Naive thymus-derived CD4-positive, alpha-beta T cell (primary cell): ENCODE measurements at regions of chr1 and their contacts with region 1.

Region 1: GRCh38 chr1:100866041-100866900 is 28.4 kb downstream of the EXTL2 start:
- DNase-seq: peak in 4 of 9 donors; percentile 6 to 21 (median 14)
- ATAC-seq: peak; percentile 51
- H3K4me3 ChIP-seq: no peak overlapping the region
- H3K4me3 Mint-ChIP-seq: no peak overlapping the region
- H3K27ac ChIP-seq: no peak overlapping the region
- H3K27ac Mint-ChIP-seq: no peak overlapping the region
- H3K4me1 ChIP-seq: no peaks in the 10 kb centered on the region
- H3K4me1 Mint-ChIP-seq: peaks cover 0 to 2% (median 0%) of the 10 kb centered on the region in 7 donors
- H3K27me3 ChIP-seq: no peaks in the 10 kb centered on the region
- H3K27me3 Mint-ChIP-seq: no peaks in the 10 kb centered on the region

Region 2: DNA sequence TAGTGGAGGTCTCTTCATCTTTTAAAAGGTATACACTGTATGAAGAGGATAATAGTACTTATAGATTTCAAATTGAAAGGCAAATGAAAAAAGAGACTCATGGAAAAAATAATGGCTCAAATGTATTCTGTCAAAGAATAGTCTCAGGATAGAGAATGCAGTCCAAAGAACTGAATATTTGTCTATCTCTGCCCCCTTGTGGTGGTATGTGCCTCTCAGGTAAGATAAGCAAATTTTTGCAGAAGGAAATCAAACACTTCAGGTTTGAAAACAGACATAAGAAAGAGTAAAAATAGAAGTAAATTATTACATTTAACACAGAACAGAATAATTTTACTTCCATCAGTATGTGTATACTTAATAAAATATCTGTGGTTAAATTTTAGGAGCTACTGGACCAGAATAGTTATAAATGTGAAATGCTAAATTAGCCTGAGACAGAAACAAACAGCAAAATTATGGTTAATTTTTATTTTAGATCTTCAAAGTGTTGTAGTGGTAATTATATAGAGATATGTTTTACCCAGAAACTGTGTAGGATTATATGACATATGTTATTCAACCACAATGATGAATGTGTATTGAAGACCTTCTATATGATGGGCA is 1384.8 kb before region 1 on chr1:
- CTCF ChIA-PET with region 1: no interaction called
- POLR2A ChIA-PET with region 1: no interaction called
- intact Hi-C with region 1: loop called in 1 of 2 experiments (anchors 5 kb)
- DNase-seq: peak in 7 of 9 donors; percentile 6 to 61 (median 47)
- ATAC-seq: peak; percentile 59
- H3K4me3 ChIP-seq: no peak overlapping the region
- H3K4me3 Mint-ChIP-seq: no peak overlapping the region
- H3K27ac ChIP-seq: no peak overlapping the region
- H3K27ac Mint-ChIP-seq: no peak overlapping the region
- H3K4me1 ChIP-seq: no peaks in the 10 kb centered on the region
- H3K4me1 Mint-ChIP-seq: no peaks in the 10 kb centered on the region
- H3K27me3 ChIP-seq: no peaks in the 10 kb centered on the region
- H3K27me3 Mint-ChIP-seq: peaks cover 8 to 35% (median 17%) of the 10 kb centered on the region in 5 donors

Region 3: GRCh38 chr1:99891997-99892396 is 974.3 kb before region 1 on chr1:
- CTCF ChIA-PET with region 1: no interaction called
- POLR2A ChIA-PET with region 1: no interaction called
- intact Hi-C with region 1: loop called in 1 of 2 experiments (anchors 10 kb)
- DNase-seq: no peak
- ATAC-seq: no peak
- H3K4me3 ChIP-seq: no peak overlapping the region
- H3K4me3 Mint-ChIP-seq: no peak overlapping the region
- H3K27ac ChIP-seq: no peak overlapping the region
- H3K27ac Mint-ChIP-seq: no peak overlapping the region
- H3K4me1 ChIP-seq: no peaks in the 10 kb centered on the region
- H3K4me1 Mint-ChIP-seq: no peaks in the 10 kb centered on the region
- H3K27me3 ChIP-seq: no peaks in the 10 kb centered on the region
- H3K27me3 Mint-ChIP-seq: no peaks in the 10 kb centered on the region

Region 4: DNA sequence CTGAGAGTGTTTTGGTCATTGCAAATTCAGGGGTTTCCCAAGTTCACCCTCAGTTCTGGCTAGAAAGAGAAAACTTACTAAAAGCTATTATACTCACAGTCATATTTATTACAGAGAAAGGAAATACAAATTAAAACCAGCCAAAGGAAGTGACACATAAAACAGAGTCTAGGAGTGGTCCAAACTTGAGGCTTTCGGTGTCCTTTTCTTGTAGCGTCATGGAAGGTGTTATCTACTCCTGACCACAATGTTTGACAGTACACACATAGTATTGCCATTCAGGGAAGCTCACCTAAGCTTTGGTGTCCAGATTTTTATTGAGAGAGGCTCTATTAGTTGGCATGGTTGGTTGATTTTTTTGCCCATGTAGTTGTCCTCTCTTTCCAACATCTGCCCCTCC is 837.5 kb before region 1 on chr1:
- CTCF ChIA-PET with region 1: no interaction called
- POLR2A ChIA-PET with region 1: no interaction called
- intact Hi-C with region 1: no loop called
- DNase-seq: no peak
- ATAC-seq: peak; percentile 89
- H3K4me3 ChIP-seq: no peak overlapping the region
- H3K4me3 Mint-ChIP-seq: peak overlapping the region in 1 of 10 donors; percentile 44
- H3K27ac ChIP-seq: no peak overlapping the region
- H3K27ac Mint-ChIP-seq: peak overlapping the region in 1 of 9 donors; percentile 11
- H3K4me1 ChIP-seq: peaks cover 0 to 5% of the 10 kb centered on the region in 2 donors
- H3K4me1 Mint-ChIP-seq: peaks cover 0 to 10% (median 0%) of the 10 kb centered on the region in 7 donors
- H3K27me3 ChIP-seq: no peaks in the 10 kb centered on the region
- H3K27me3 Mint-ChIP-seq: no peaks in the 10 kb centered on the region

Region 5: DNA sequence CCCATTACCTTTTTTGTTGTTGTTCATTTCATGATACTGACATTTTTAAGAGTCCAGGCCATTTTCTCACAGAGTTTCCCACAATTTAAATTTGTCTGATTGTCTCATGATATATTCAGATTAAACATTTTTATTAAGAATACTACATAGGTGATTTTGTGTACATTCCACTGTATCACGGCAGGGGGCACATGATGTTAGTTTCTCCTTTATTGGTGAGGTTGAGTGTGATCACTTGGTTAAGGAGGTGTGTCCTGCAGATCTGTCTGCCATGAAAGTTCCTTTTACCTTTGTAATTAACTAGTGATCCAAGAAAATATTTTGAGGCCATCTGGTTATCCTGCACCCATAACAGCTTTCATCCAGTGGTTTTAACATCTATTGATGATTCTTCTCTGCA is 588.4 kb before region 1 on chr1:
- CTCF ChIA-PET with region 1: no interaction called
- POLR2A ChIA-PET with region 1: no interaction called
- intact Hi-C with region 1: loop called (anchors 1 to 5 kb)
- DNase-seq: peak in 6 of 9 donors; percentile 5 to 42 (median 28)
- ATAC-seq: peak; percentile 75
- H3K4me3 ChIP-seq: no peak overlapping the region
- H3K4me3 Mint-ChIP-seq: no peak overlapping the region
- H3K27ac ChIP-seq: no peak overlapping the region
- H3K27ac Mint-ChIP-seq: peak overlapping the region in 3 of 9 donors; percentile 9 to 37 (median 27)
- H3K4me1 ChIP-seq: no peaks in the 10 kb centered on the region
- H3K4me1 Mint-ChIP-seq: peaks cover 9 to 50% (median 34%) of the 10 kb centered on the region in 7 donors
- H3K27me3 ChIP-seq: no peaks in the 10 kb centered on the region
- H3K27me3 Mint-ChIP-seq: no peaks in the 10 kb centered on the region

Region 6: DNA sequence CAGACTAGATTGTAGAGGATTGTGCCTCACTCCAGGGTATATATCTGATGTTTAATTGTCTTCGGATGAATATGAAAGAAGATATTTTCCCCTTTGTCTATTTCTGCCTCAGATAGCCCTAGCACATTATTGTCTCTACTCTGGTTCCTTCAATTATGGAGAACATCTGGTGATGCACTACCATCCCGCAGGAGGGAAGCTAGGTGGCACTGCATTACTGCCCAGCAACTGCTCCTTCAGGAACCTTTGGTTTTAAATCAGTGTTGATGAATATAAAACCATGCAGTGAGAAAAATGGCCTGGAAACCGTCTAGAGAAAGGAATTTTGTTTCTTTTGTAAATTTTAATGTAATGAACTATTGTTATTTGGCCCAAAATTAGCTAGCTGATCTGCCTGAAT is 259.8 kb before region 1 on chr1:
- CTCF ChIA-PET with region 1: no interaction called
- POLR2A ChIA-PET with region 1: no interaction called
- intact Hi-C with region 1: loop called (anchors 1 to 2 kb)
- DNase-seq: no peak
- ATAC-seq: no peak
- H3K4me3 ChIP-seq: no peak overlapping the region
- H3K4me3 Mint-ChIP-seq: no peak overlapping the region
- H3K27ac ChIP-seq: no peak overlapping the region
- H3K27ac Mint-ChIP-seq: no peak overlapping the region
- H3K4me1 ChIP-seq: no peaks in the 10 kb centered on the region
- H3K4me1 Mint-ChIP-seq: no peaks in the 10 kb centered on the region
- H3K27me3 ChIP-seq: no peaks in the 10 kb centered on the region
- H3K27me3 Mint-ChIP-seq: peaks cover 12 to 29% (median 20%) of the 10 kb centered on the region in 5 donors

Region 7: DNA sequence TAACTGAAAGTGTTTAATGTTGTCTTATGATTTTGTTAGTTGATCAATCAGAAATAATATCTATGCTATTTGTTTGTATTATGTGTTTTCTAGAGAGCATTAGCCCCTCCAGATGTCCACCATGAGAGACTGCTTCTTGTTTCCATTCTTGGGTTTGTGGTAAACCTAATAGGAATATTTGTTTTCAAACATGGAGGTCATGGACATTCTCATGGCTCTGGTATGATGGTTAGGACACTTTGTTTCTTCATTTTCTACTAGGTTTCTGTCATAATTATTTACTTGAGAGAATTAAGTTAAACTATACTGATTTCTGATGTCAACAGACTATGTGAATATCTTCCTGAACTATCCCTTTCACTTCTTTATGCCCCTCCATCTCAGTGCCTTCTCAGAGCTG is 45.7 kb after region 1 on chr1:
- CTCF ChIA-PET with region 1: no interaction called
- POLR2A ChIA-PET with region 1: no interaction called
- intact Hi-C with region 1: no loop called
- DNase-seq: no peak
- ATAC-seq: no peak
- H3K4me3 ChIP-seq: no peak overlapping the region
- H3K4me3 Mint-ChIP-seq: no peak overlapping the region
- H3K27ac ChIP-seq: no peak overlapping the region
- H3K27ac Mint-ChIP-seq: peak overlapping the region in 6 of 9 donors; percentile 5 to 79 (median 32)
- H3K4me1 ChIP-seq: no peaks in the 10 kb centered on the region
- H3K4me1 Mint-ChIP-seq: peaks cover 19 to 47% (median 44%) of the 10 kb centered on the region in 7 donors
- H3K27me3 ChIP-seq: no peaks in the 10 kb centered on the region
- H3K27me3 Mint-ChIP-seq: no peaks in the 10 kb centered on the region

Region 8: GRCh38 chr1:101022294-101022693 is 156.0 kb after region 1 on chr1:
- CTCF ChIA-PET with region 1: no interaction called
- POLR2A ChIA-PET with region 1: no interaction called
- intact Hi-C with region 1: no loop called
- DNase-seq: no peak
- ATAC-seq: no peak
- H3K4me3 ChIP-seq: no peak overlapping the region
- H3K4me3 Mint-ChIP-seq: peak overlapping the region in 3 of 10 donors; percentile 17 to 89 (median 41)
- H3K27ac ChIP-seq: no peak overlapping the region
- H3K27ac Mint-ChIP-seq: peak overlapping the region in 6 of 9 donors; percentile 5 to 96 (median 52)
- H3K4me1 ChIP-seq: peaks cover 8 to 23% of the 10 kb centered on the region in 2 donors
- H3K4me1 Mint-ChIP-seq: peaks cover 37 to 88% (median 72%) of the 10 kb centered on the region in 7 donors
- H3K27me3 ChIP-seq: no peaks in the 10 kb centered on the region
- H3K27me3 Mint-ChIP-seq: no peaks in the 10 kb centered on the region